ENCODE measurements at regions of chr1 and their contacts with region 1.

Region 1: DNA sequence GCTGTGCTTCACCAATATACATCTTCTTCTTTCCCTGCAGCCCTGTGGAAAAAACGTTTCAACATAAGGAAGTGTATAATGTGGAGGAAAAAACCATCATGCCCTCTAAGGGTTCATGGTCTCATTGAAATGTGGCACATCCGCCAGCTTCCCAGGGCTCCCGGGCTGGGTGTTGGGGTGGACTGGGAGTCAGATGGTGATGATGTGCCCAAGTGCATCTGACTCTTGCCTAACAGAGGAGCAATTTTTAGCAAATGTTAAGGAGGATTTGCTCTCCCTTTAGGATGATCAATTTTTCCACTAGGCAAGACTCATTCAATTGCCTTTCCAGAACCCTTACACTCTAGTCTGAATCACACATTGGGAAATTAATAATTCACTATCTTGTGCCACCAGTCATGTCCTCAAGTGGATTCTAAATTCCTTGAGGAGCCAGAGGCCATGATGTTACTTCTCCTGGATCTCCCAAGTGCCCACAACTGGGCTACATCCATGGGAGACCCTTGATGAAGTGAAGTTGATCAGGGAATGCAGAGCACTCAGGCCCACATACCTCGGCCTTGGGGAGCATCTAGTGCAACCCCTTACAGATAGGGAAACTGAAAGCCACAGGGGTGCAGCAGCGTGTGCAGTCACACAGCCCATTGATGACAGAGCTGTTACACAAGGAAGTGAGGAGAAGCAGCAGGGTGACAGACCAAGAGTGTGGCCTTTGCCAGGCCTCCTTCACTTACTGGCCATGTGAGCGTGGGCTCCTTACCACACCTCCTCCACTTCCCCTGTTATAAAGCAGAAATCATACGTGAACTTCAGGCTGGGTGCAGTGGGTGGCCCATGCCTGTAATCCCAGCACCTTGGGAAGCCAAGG is 100.0 kb upstream of the SLC44A3 start:
- DNase-seq: peak; percentile 95 to 96 (median 95)
- H3K4me3 ChIP-seq: peak overlapping the region in 1 of 3 experiments; percentile 42
- H3K4me3 Mint-ChIP-seq: peak overlapping the region; percentile 66 to 76
- H3K27ac ChIP-seq: peak overlapping the region; percentile 97 to 98
- H3K27ac Mint-ChIP-seq: peak overlapping the region; percentile 97 to 100 (median 99)
- H3K4me1 ChIP-seq: peaks cover 78 to 87% of the 10 kb centered on the region in 2 donors
- H3K4me1 Mint-ChIP-seq: peaks cover 76% of the 10 kb centered on the region
- H3K27me3 ChIP-seq: no peaks in the 10 kb centered on the region
- H3K27me3 Mint-ChIP-seq: no peaks in the 10 kb centered on the region
- CTCF ChIP-seq: no peak

Region 2: GRCh38 chr1:93919780-93920179 is 800.4 kb before region 1 on chr1:
- intact Hi-C with region 1: no loop called
- DNase-seq: no peak
- H3K4me3 ChIP-seq: no peak overlapping the region
- H3K4me3 Mint-ChIP-seq: no peak overlapping the region
- H3K27ac ChIP-seq: no peak overlapping the region
- H3K27ac Mint-ChIP-seq: no peak overlapping the region
- H3K4me1 ChIP-seq: no peaks in the 10 kb centered on the region
- H3K4me1 Mint-ChIP-seq: no peaks in the 10 kb centered on the region
- H3K27me3 ChIP-seq: no peaks in the 10 kb centered on the region
- H3K27me3 Mint-ChIP-seq: peaks cover 2 to 5% (median 5%) of the 10 kb centered on the region in 3 donors
- CTCF ChIP-seq: no peak

Region 3: DNA sequence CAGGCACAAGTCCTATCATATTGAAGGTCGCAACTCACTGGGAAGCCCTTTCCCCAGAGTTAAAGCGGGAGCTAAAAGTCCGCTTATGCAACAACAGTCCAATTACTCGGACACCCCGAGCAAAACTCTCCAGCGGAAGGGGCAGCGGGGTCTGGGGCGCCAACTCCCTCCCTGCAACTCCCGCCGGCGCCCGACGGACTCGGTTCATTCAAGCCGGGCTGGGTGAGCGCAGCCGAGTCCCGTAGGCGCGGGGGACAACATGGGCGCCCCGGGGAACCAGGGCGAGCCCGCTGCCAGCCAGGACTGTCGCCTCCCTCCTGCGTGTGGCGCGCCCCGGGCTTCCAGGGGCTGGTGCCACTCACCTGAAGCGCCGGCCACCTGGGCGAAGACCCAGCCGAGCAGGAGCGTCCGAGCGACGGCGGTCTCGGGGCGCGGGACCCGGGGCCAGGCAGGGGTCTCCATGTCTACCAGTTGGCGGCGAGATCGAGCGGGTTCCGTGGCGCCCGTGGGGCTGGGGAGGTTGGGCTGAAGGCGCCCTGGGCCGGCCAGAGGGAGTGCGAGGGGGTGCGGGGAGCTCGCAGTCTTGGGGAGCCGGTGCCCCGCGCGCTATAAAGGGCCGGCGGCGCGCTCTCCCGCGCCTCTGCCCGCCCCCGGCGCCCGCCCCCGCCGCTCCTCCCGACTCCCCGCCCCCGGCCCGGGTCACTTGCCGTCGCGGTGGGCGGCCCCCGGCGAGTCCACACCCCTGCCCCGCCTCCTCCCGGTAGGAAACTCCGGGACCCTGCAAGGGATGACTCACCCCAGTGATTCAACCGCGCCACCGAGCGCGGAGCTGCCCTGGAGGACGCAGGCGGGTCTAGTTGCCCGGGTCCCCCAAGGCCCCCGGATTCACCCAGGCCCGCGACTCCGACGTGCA is 178.7 kb before region 1 on chr1 and contains the start of gene F3:
- intact Hi-C with region 1: loop called in 1 of 2 experiments (anchors 5 kb)
- DNase-seq: peak; percentile 82 to 96 (median 88)
- H3K4me3 ChIP-seq: peak within 1 kb of the TSS; percentile 72 to 89 (median 83)
- H3K4me3 Mint-ChIP-seq: peak within 1 kb of the TSS; percentile 90 to 95
- H3K27ac ChIP-seq: peak within 1 kb of the TSS in 1 of 2 donors; percentile 81
- H3K27ac Mint-ChIP-seq: peak within 1 kb of the TSS; percentile 80 to 95 (median 92)
- H3K4me1 ChIP-seq: peaks cover 23 to 37% of the 10 kb centered on the region in 2 donors
- H3K4me1 Mint-ChIP-seq: peaks cover 41% of the 10 kb centered on the region
- H3K27me3 ChIP-seq: peaks cover 3 to 7% of the 10 kb centered on the region in 2 donors
- H3K27me3 Mint-ChIP-seq: peaks cover 0 to 13% (median 5%) of the 10 kb centered on the region in 3 donors
- CTCF ChIP-seq: no peak
- polyA plus RNA-seq, gene F3: 0.29 to 3.7 (median 0.77) TPM

Region 4: GRCh38 chr1:94614996-94615395 is 105.2 kb before region 1 on chr1:
- intact Hi-C with region 1: loop called in 1 of 2 experiments (anchors 5 kb)
- DNase-seq: peak; percentile 50 to 88 (median 71)
- H3K4me3 ChIP-seq: peak overlapping the region in 1 of 3 experiments; percentile 10
- H3K4me3 Mint-ChIP-seq: no peak overlapping the region
- H3K27ac ChIP-seq: peak overlapping the region; percentile 9 to 30
- H3K27ac Mint-ChIP-seq: peak overlapping the region; percentile 60 to 89 (median 80)
- H3K4me1 ChIP-seq: peaks cover 31 to 43% of the 10 kb centered on the region in 2 donors
- H3K4me1 Mint-ChIP-seq: peaks cover 38% of the 10 kb centered on the region
- H3K27me3 ChIP-seq: no peaks in the 10 kb centered on the region
- H3K27me3 Mint-ChIP-seq: peaks cover 0 to under 1% (median 0%) of the 10 kb centered on the region in 3 donors
- CTCF ChIP-seq: no peak

Region 5: GRCh38 chr1:94768036-94768435 is 47.9 kb after region 1 on chr1:
- intact Hi-C with region 1: loop called in 1 of 2 experiments (anchors 5 kb)
- DNase-seq: peak; percentile 73 to 96 (median 86)
- H3K4me3 ChIP-seq: no peak overlapping the region
- H3K4me3 Mint-ChIP-seq: no peak overlapping the region
- H3K27ac ChIP-seq: peak overlapping the region in 1 of 2 donors; percentile 71
- H3K27ac Mint-ChIP-seq: peak overlapping the region; percentile 49 to 89 (median 82)
- H3K4me1 ChIP-seq: peaks cover 39 to 41% of the 10 kb centered on the region in 2 donors
- H3K4me1 Mint-ChIP-seq: peaks cover 32% of the 10 kb centered on the region
- H3K27me3 ChIP-seq: no peaks in the 10 kb centered on the region
- H3K27me3 Mint-ChIP-seq: peaks cover 0 to 2% (median 0%) of the 10 kb centered on the region in 3 donors
- CTCF ChIP-seq: no peak

Region 6: GRCh38 chr1:94778808-94779207 is 58.6 kb after region 1 on chr1:
- intact Hi-C with region 1: no loop called
- DNase-seq: no peak
- H3K4me3 ChIP-seq: no peak overlapping the region
- H3K4me3 Mint-ChIP-seq: no peak overlapping the region
- H3K27ac ChIP-seq: no peak overlapping the region
- H3K27ac Mint-ChIP-seq: no peak overlapping the region
- H3K4me1 ChIP-seq: peaks cover 0 to 2% of the 10 kb centered on the region in 2 donors
- H3K4me1 Mint-ChIP-seq: peaks cover 2% of the 10 kb centered on the region
- H3K27me3 ChIP-seq: no peaks in the 10 kb centered on the region
- H3K27me3 Mint-ChIP-seq: peaks cover 3 to 5% (median 5%) of the 10 kb centered on the region in 3 donors
- CTCF ChIP-seq: no peak

Region 7: GRCh38 chr1:94792473-94793295 is 72.5 kb after region 1 on chr1:
- intact Hi-C with region 1: loop called (anchors 5 kb)
- DNase-seq: peak; percentile 75 to 95 (median 88)
- H3K4me3 ChIP-seq: peak overlapping the region in 1 of 3 experiments; percentile 2
- H3K4me3 Mint-ChIP-seq: peak overlapping the region in 1 of 2 donors; percentile 42
- H3K27ac ChIP-seq: peak overlapping the region in 1 of 2 donors; percentile 69
- H3K27ac Mint-ChIP-seq: peak overlapping the region; percentile 73 to 90 (median 81)
- H3K4me1 ChIP-seq: peaks cover 50 to 55% of the 10 kb centered on the region in 2 donors
- H3K4me1 Mint-ChIP-seq: peaks cover 51% of the 10 kb centered on the region
- H3K27me3 ChIP-seq: no peaks in the 10 kb centered on the region
- H3K27me3 Mint-ChIP-seq: peaks cover 0 to 2% (median 0%) of the 10 kb centered on the region in 3 donors
- CTCF ChIP-seq: peak; percentile 60